Right lobe of liver (tissue), 6 donors: ENCODE measurements at regions of chr14 and their contacts with region 1.

Region 1: DNA sequence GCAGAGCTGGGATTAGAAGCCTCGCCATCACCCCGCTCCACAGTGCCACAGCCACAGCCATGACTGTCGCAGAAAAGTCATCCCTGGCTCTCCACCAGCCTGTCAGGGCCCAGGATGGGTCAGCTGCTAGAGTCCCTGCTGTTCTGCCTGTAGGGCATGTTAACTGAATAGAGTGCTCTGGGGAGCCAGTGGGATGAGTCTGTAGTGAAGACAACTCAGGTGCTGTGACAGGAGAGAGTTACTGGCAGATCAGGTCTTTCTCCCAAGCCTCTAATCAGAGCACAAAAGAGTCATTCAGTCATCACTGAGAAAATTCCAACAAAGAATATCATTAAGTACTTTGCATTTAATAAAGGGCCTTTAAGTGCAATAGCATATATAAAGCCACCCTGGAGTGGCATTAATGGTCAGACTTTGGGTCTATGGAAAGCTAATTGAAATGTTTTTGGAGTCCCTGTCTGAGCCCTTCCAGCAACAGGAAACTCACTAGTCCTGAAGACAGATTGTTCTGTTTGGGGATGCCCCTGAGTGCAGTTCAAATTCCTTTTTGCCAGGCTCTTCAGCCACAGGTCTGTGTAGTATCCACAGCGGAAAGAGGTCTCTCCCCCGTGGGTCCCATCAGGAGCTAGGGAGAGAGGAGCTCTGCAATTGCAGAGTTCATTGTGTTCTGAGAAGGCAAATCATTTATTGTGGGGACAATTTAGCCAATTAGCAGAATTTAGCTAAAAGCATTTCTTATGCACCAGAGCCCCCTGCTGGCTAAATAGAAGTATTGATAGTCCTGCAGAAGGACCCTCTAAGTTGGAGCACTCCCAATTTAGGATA is 45.2 kb upstream of the C14orf132 start:
- DNase-seq: no peak
- ATAC-seq: peak; percentile 63 to 77 (median 73)
- H3K4me3 ChIP-seq: no peak overlapping the region
- H3K27ac ChIP-seq: no peak overlapping the region
- H3K4me1 ChIP-seq: no peaks in the 10 kb centered on the region
- H3K27me3 ChIP-seq: no peaks in the 10 kb centered on the region
- CTCF ChIP-seq: peak; percentile 79 to 85 (median 83)
- POLR2A ChIP-seq: no peak

Region 2: DNA sequence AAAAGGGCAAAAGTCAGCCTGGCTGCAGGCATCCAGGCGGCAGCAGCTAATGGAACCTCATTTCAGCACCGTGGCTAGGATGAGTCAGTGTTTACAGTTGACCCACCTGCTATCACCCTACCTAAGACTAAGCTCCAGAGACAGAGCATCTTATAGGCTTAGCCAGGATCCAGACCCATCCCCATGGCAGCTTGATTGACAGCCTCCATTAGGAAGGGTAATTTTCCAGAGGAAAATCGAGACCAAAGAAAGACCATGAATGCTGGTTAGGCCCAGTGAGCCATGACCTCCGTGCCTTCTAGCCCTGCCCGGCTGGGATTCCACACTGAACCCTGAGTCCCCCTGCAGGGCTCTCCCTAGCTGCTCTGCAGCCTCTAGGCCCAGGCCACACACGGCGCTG is 78.7 kb before region 1 on chr14:
- intact Hi-C with region 1: no loop called
- DNase-seq: no peak
- ATAC-seq: no peak
- H3K4me3 ChIP-seq: no peak overlapping the region
- H3K27ac ChIP-seq: no peak overlapping the region
- H3K4me1 ChIP-seq: no peaks in the 10 kb centered on the region
- H3K27me3 ChIP-seq: no peaks in the 10 kb centered on the region
- CTCF ChIP-seq: no peak
- POLR2A ChIP-seq: no peak

Region 3: GRCh38 chr14:96275177-96276112 is 281.5 kb after region 1 on chr14:
- intact Hi-C with region 1: loop called in 1 of 2 experiments (anchors 10 kb)
- DNase-seq: peak; percentile 74 to 76 (median 75)
- ATAC-seq: peak; percentile 74 to 91 (median 84)
- H3K4me3 ChIP-seq: no peak overlapping the region
- H3K27ac ChIP-seq: no peak overlapping the region
- H3K4me1 ChIP-seq: no peaks in the 10 kb centered on the region
- H3K27me3 ChIP-seq: no peaks in the 10 kb centered on the region
- CTCF ChIP-seq: peak; percentile 88 to 97 (median 94)
- POLR2A ChIP-seq: no peak